ENCODE measurements at regions of chr7 and their contacts with region 1.

Region 1: DNA sequence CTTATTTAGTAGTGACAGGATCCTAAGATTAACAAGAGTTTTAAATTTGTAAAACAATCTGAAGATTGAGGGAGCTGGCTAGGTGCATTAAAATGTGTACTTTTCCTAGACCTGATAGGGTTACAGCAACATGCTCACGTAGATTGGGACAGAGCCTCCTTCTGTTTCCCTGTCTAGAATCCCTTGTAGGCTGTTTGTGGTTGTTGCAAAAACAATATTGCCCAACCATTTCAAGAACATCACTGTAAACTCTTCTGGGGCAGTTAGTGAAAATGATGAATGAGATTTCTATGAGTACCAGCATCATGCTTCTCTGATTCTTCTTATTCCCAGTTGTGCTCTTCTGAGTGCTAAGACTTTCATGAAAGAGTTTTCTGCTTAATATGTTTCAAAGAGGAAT is 14.7 kb upstream of the CPED1 start:
- DNase-seq: no peak
- H3K4me3 ChIP-seq: no peak overlapping the region
- H3K27ac ChIP-seq: no peak overlapping the region
- H3K4me1 ChIP-seq: no peaks in the 10 kb centered on the region
- H3K27me3 ChIP-seq: no peaks in the 10 kb centered on the region
- CTCF ChIP-seq: no peak

Region 2: DNA sequence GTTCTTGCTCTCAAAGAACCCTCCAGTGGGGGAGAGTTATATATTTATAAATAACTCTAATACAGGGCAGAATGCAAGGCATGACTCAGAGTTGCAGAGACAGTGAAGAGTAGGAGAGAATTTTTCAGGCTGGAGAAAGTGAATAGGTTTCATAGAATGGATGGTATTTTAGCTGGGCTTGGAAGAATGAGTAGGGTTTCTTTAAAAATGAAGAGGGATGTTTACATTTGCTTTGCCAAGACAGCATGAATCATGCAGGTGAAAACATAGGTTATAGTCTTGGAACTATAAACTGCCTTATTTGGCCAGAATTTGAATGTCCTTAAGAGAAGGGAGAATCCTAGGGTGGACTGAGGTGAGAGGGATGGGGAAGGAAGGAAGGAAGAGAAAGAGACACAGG is 139.4 kb after region 1 on chr7:
- intact Hi-C with region 1: no loop called
- DNase-seq: no peak
- H3K4me3 ChIP-seq: no peak overlapping the region
- H3K27ac ChIP-seq: no peak overlapping the region
- H3K4me1 ChIP-seq: no peaks in the 10 kb centered on the region
- H3K27me3 ChIP-seq: no peaks in the 10 kb centered on the region
- CTCF ChIP-seq: no peak

Region 3: GRCh38 chr7:121262221-121262620 is 288.4 kb after region 1 on chr7:
- intact Hi-C with region 1: loop called (anchors 5 kb)
- DNase-seq: no peak
- H3K4me3 ChIP-seq: no peak overlapping the region
- H3K27ac ChIP-seq: no peak overlapping the region
- H3K4me1 ChIP-seq: no peaks in the 10 kb centered on the region
- H3K27me3 ChIP-seq: no peaks in the 10 kb centered on the region
- CTCF ChIP-seq: no peak

Measured in left ventricle myocardium inferior (tissue), 1 donor.